ENCODE measurements at regions of chr18 and their contacts with region 1.

Region 1: DNA sequence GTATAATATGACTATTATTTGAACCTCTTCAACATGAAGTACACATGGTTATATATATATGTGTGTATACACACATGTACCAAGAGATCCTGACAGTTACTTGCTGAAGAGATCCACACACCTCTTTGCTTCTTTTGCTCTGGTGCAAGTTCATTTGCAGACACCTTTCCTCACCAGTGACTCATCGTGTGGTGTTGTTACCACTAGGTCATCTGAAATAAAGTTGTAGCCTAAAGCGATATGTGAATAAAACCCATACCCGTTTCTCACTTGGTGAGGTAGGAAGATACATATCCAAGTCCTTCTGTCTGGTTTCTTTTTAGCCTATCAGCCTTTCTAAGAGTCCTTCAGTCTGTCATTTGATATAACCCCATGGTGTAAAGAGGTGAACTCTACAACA is 379.5 kb upstream of the RAB12 start:
- DNase-seq: no peak
- ATAC-seq: no peak
- H3K4me3 ChIP-seq: no peak overlapping the region
- H3K27ac ChIP-seq: no peak overlapping the region
- H3K4me1 ChIP-seq: no peaks in the 10 kb centered on the region
- H3K27me3 ChIP-seq: no peaks in the 10 kb centered on the region
- CTCF ChIP-seq: no peak
- POLR2A ChIP-seq: no peak

Region 2: GRCh38 chr18:8140841-8141501 is 88.8 kb before region 1 on chr18:
- in situ Hi-C with region 1: loop called in 1 of 4 experiments (anchors 25 kb)
- intact Hi-C with region 1: no loop called
- DNase-seq: peak; percentile 83 to 85
- ATAC-seq: peak; percentile 85 to 88
- H3K4me3 ChIP-seq: peak overlapping the region in 1 of 4 donors; percentile 7
- H3K27ac ChIP-seq: peak overlapping the region; percentile 64 to 93 (median 79)
- H3K4me1 ChIP-seq: peaks cover 30 to 45% of the 10 kb centered on the region in 2 donors
- H3K27me3 ChIP-seq: no peaks in the 10 kb centered on the region
- CTCF ChIP-seq: no peak
- POLR2A ChIP-seq: peak in 1 of 2 donors; percentile 53

Region 3: DNA sequence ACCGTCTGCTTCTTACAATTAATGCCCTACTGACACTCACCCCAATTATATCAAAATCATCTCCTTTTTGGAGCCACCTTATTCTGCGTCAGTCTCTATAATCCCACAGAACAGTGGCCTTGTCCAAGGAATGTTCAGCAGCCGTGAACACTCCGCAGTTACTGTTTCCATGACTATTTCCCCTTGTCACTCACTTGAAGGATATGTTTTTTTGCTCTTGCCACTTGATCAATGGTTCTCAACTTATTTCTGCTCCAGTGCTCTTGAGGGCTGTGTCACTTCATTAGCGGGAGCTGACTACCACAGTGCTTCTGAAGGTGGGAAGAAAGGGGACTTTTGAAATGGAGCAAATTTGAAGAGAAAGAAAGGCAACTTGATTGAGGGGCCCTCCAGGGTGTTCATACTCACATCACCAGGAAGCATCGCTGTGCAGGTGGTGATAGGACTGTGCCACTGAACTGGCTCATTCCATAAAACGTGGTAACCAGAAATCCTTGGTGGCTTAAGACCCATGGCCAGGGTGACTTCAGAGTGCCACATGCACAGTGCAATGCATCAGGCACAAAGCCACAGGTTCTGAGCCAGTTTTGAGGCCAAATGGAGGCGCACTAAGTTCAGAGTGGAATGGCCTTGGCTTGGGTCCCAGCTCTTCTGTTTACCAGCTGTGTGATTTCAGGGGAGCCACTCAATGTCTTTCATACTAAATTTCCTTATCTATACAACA is 58.9 kb after region 1 on chr18:
- in situ Hi-C with region 1: no loop called
- intact Hi-C with region 1: no loop called
- DNase-seq: no peak
- ATAC-seq: no peak
- H3K4me3 ChIP-seq: no peak overlapping the region
- H3K27ac ChIP-seq: no peak overlapping the region
- H3K4me1 ChIP-seq: peaks cover 7 to 17% of the 10 kb centered on the region in 2 donors
- H3K27me3 ChIP-seq: no peaks in the 10 kb centered on the region
- CTCF ChIP-seq: no peak
- POLR2A ChIP-seq: no peak